HCT116 (cell line): ENCODE measurements at regions of chr10 and their contacts with region 1.

Region 1: DNA sequence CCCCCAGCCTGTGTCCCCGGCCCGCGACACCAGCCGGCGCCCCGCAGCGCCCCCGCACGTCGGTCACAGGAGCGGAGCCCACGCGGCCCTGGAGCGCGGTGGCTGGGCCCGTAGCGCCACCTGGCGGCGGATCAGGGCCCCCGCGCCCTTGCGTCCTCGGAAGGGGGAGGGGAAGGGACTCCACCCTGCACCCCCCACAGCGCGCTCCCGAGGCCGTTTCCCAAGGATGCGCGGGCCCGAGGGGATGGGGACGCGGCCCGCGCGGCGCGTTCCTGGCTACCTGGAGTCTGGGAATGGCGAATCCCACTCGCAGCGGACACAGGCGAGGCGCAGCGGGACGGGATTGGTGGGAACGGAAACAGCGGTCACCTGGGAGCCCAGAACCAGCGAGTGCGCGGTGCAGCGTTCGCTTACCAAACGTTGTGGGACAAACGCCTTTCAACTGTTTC is 23.8 kb upstream of the MKI67 start:
- DNase-seq: peak; percentile 53
- ATAC-seq: peak; percentile 97
- H3K4me3 ChIP-seq: no peak overlapping the region
- H3K27ac ChIP-seq: no peak overlapping the region
- H3K4me1 ChIP-seq: peaks cover 0 to 10% of the 10 kb centered on the region in 2 experiments; a peak in 2 of 4 replicates
- H3K27me3 ChIP-seq: no peaks in the 10 kb centered on the region
- CTCF ChIP-seq: peak; percentile 87 to 99 (median 98)
- POLR2A ChIP-seq: no peak
- RAD21 ChIP-seq: peak; percentile 95

Region 2: DNA sequence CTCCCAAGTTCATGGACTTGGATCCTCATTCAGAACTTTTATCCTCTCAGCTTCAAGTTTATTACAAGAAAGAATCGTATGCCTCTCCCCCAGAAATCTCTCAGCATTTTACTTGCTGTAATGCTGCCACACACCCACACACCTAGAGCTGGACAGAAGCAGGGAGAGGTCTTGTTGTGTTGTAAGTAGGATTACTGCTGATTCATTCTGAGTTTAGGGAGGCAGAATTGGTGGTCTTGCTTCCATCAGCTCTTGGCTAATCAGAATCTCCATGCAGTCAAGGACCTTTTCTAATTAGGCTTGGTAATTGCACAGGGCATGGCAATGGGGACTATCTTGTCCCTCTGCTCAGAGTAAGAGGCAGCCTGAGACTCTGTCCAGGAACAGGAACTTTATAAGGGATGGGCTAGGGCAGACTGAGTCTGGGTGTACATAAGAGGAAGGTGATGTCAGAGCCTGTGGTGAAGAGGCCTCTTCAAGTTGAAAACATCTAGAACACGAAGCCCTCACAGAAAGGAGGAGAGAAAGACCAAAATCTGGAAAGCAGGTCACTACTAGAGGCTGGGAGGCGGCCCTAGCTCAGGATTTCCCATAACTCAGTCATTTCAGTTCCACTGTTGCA is 250.2 kb before region 1 on chr10:
- CTCF ChIA-PET with region 1: no interaction called
- POLR2A ChIA-PET with region 1: no interaction called
- RAD21 ChIA-PET with region 1: no interaction called
- intact Hi-C with region 1: loop called (anchors 5 kb)
- DNase-seq: no peak
- ATAC-seq: no peak
- H3K4me3 ChIP-seq: no peak overlapping the region
- H3K27ac ChIP-seq: no peak overlapping the region
- H3K4me1 ChIP-seq: no peaks in the 10 kb centered on the region
- H3K27me3 ChIP-seq: no peaks in the 10 kb centered on the region
- CTCF ChIP-seq: no peak
- POLR2A ChIP-seq: no peak
- RAD21 ChIP-seq: no peak

Region 3: DNA sequence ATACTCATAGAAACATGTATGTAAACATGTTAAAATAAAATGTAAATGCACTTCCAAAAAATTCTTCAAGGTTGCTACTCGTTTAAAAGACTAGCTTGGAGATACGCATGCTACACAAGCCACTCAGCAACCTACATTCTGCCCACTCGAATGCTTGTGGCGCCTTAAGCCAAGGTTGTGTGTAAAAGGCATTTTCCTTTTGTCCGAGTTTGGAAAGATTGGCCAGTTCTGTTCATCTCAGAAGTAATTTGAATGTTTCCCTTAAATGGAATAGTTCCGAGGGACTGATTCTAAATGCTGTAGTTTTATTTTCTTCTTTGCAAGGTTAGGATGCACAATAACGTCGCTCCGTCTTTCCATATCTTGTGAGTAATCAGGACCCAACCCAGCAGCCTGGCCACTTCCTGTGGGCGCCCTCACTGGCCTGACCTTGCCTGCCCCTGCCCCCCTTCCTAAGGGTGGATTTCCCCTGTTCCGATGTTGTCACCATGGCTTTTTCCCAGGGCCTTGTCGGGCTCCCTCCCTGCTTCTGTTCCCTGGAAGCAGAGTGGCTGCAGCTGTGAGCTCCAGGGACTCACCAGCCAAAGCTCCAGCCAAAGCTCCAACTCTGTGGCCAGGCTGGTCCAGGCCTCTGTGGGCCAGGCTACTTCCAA is 172.6 kb before region 1 on chr10:
- CTCF ChIA-PET with region 1: no interaction called
- POLR2A ChIA-PET with region 1: no interaction called
- RAD21 ChIA-PET with region 1: no interaction called
- intact Hi-C with region 1: no loop called
- DNase-seq: no peak
- ATAC-seq: no peak
- H3K4me3 ChIP-seq: no peak overlapping the region
- H3K27ac ChIP-seq: no peak overlapping the region
- H3K4me1 ChIP-seq: no peaks in the 10 kb centered on the region
- H3K27me3 ChIP-seq: no peaks in the 10 kb centered on the region
- CTCF ChIP-seq: no peak
- POLR2A ChIP-seq: no peak
- RAD21 ChIP-seq: no peak

Region 4: GRCh38 chr10:128078136-128078969 is 71.7 kb before region 1 on chr10:
- CTCF ChIA-PET with region 1: interaction called, 14 read pairs
- POLR2A ChIA-PET with region 1: no interaction called
- RAD21 ChIA-PET with region 1: interaction called in 1 of 2 experiments, 3 read pairs
- intact Hi-C with region 1: loop called (anchors 1 kb)
- DNase-seq: peak; percentile 28
- ATAC-seq: peak; percentile 98
- H3K4me3 ChIP-seq: no peak overlapping the region
- H3K27ac ChIP-seq: no peak overlapping the region
- H3K4me1 ChIP-seq: no peaks in the 10 kb centered on the region
- H3K27me3 ChIP-seq: no peaks in the 10 kb centered on the region
- CTCF ChIP-seq: peak; percentile 96 to 97 (median 97)
- POLR2A ChIP-seq: no peak
- RAD21 ChIP-seq: peak; percentile 94

Region 5: DNA sequence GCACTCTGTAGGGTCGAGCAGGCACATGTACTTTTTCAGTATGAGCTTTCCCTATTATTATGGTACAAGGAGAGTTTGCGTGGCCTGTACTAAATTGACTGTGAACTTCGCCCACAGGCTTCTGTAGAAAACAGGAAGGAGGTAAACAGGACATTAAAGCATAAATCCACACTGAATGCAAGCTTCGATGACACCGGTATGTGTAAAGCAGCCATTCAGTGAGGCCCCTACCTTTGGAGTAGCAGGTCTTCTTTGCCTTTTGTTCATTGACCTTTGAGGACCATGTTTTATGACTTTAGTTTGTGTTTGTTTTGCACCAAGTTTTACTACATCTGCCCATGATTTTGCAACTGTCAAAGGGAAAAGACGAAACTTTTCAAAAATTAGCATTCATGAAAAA is 38.4 kb before region 1 on chr10:
- CTCF ChIA-PET with region 1: no interaction called
- POLR2A ChIA-PET with region 1: no interaction called
- RAD21 ChIA-PET with region 1: no interaction called
- intact Hi-C with region 1: no loop called
- DNase-seq: no peak
- ATAC-seq: no peak
- H3K4me3 ChIP-seq: no peak overlapping the region
- H3K27ac ChIP-seq: no peak overlapping the region
- H3K4me1 ChIP-seq: no peaks in the 10 kb centered on the region
- H3K27me3 ChIP-seq: no peaks in the 10 kb centered on the region
- CTCF ChIP-seq: no peak
- POLR2A ChIP-seq: no peak
- RAD21 ChIP-seq: no peak

Region 6: DNA sequence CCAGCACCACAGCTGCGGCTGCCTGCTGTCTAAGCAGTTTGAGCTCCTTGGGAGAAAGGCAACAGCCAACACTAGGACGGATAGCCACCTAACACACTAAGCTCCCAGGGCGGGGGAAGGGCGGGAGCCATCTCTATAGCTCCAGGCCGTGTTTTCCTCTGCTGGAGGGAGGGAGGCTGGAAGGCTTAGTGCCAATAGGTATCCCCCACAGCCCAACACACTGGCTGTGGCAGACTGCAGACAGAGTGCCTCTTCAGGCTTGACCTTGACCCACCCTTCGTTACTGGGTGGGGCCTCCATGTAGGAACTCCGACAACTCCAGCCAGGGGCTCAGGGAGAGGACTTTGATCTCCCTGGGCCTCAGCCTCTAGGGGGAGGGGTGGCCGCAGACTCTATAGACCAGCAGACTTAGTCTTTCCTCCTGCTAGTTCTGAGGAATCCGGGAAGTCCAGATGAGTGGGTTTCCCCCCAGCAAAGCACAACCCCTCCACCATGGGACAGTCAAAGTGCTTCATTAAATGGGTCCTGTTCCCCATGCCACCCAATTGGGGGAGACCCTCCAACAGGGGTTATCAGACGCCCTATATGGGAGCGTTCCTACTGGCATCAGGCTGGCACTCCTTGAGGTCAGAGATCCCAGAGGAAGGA is 290.6 kb after region 1 on chr10:
- CTCF ChIA-PET with region 1: no interaction called
- POLR2A ChIA-PET with region 1: no interaction called
- RAD21 ChIA-PET with region 1: no interaction called
- intact Hi-C with region 1: no loop called
- DNase-seq: no peak
- ATAC-seq: no peak
- H3K4me3 ChIP-seq: no peak overlapping the region
- H3K27ac ChIP-seq: no peak overlapping the region
- H3K4me1 ChIP-seq: no peaks in the 10 kb centered on the region
- H3K27me3 ChIP-seq: peaks cover 49% of the 10 kb centered on the region
- CTCF ChIP-seq: no peak
- POLR2A ChIP-seq: no peak
- RAD21 ChIP-seq: no peak